ENCODE measurements at regions of chr14 and their contacts with region 1.

Region 1: GRCh38 chr14:61662437-61663311 is 32.6 kb upstream of the HIF1A start:
- DNase-seq: peak; percentile 73
- H3K4me3 Mint-ChIP-seq: peak overlapping the region; percentile 60
- H3K27ac Mint-ChIP-seq: peak overlapping the region; percentile 98
- H3K4me1 Mint-ChIP-seq: peaks cover 66% of the 10 kb centered on the region
- H3K27me3 Mint-ChIP-seq: no peaks in the 10 kb centered on the region

Region 2: GRCh38 chr14:61342486-61342885 is 320.2 kb before region 1 on chr14:
- CTCF ChIA-PET with region 1: no interaction called
- POLR2A ChIA-PET with region 1: no interaction called
- intact Hi-C with region 1: loop called (anchors 5 kb)
- DNase-seq: peak; percentile 91
- H3K4me3 Mint-ChIP-seq: peak overlapping the region; percentile 82
- H3K27ac Mint-ChIP-seq: peak overlapping the region; percentile 98
- H3K4me1 Mint-ChIP-seq: peaks cover 94% of the 10 kb centered on the region
- H3K27me3 Mint-ChIP-seq: no peaks in the 10 kb centered on the region

Region 3: DNA sequence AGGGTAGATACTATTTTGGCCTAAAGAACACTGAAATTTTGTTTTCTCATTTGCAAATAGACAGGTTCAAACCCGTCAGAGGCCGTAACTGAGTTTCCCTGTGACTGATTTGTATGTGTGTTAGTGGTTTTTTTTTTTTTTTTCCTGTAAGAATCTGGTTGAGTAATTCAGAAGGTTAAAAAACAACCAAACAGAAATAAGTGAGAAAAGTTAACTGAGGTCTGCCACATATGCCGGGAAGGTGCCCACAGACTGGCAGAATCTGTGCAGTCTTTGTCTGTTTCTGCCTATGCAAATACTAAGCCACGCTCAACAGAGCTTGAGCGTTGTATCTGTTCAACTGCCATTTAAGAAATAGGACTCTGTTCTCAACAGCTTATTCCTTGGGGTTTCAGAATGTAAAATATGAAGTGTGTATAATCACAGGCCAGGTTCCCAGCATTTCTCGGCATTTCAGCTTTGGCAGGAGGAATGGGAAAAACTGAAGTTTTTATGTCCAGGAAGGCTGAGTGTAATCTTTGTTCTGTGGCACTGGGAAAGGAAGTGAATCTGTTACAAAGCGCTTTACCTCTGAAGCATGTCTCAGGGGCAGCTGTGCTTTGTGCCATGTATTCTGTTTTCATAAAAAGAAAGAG is 159.4 kb before region 1 on chr14:
- CTCF ChIA-PET with region 1: interaction called, 3 read pairs
- POLR2A ChIA-PET with region 1: interaction called, 16 read pairs
- intact Hi-C with region 1: loop called (anchors 1 kb)
- DNase-seq: peak; percentile 90
- H3K4me3 Mint-ChIP-seq: peak overlapping the region; percentile 62
- H3K27ac Mint-ChIP-seq: peak overlapping the region; percentile 98
- H3K4me1 Mint-ChIP-seq: peaks cover 98% of the 10 kb centered on the region
- H3K27me3 Mint-ChIP-seq: no peaks in the 10 kb centered on the region

Region 4: GRCh38 chr14:61561657-61562276 is 100.9 kb before region 1 on chr14:
- CTCF ChIA-PET with region 1: interaction called, 4 read pairs
- POLR2A ChIA-PET with region 1: interaction called, 5 read pairs
- intact Hi-C with region 1: loop called (anchors 1 kb)
- DNase-seq: no peak
- H3K4me3 Mint-ChIP-seq: no peak overlapping the region
- H3K27ac Mint-ChIP-seq: peak overlapping the region; percentile 83
- H3K4me1 Mint-ChIP-seq: peaks cover 66% of the 10 kb centered on the region
- H3K27me3 Mint-ChIP-seq: no peaks in the 10 kb centered on the region

Region 5: DNA sequence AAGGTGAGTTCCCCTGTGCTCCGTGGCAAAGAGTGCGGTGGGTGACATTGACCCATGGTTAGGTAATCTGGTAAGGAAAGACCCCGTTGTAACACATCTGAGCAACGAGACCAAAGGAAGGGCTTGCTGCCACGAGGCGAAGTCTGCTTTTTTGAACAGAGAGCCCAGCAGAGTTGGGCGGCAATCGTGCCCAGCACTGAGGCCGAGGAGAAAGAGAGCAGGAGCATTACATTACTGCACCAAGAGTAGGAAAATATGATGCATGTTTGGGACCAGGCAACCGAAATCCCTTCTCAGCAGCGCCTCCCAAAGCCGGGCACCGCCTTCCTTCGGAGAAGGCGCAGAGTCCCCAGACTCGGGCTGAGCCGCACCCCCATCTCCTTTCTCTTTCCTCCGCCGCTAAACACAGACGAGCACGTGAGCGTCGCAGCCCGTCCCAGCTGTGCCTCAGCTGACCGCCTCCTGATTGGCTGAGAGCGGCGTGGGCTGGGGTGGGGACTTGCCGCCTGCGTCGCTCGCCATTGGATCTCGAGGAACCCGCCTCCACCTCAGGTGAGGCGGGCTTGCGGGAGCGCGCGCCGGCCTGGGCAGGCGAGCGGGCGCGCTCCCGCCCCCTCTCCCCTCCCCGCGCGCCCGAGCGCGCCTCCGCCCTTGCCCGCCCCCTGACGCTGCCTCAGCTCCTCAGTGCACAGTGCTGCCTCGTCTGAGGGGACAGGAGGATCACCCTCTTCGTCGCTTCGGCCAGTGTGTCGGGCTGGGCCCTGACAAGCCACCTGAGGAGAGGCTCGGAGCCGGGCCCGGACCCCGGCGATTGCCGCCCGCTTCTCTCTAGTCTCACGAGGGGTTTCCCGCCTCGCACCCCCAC is 32.4 kb after region 1 on chr14 and contains the start of gene HIF1A:
- CTCF ChIA-PET with region 1: interaction called, 9 read pairs
- POLR2A ChIA-PET with region 1: interaction called, 40 read pairs
- intact Hi-C with region 1: loop called (anchors 1 kb)
- DNase-seq: peak; percentile 99
- H3K4me3 Mint-ChIP-seq: peak within 1 kb of the TSS; percentile 98
- H3K27ac Mint-ChIP-seq: peak within 1 kb of the TSS; percentile 98
- H3K4me1 Mint-ChIP-seq: peaks cover 49% of the 10 kb centered on the region
- H3K27me3 Mint-ChIP-seq: no peaks in the 10 kb centered on the region
- total RNA-seq, gene HIF1A: 283 to 287 TPM

Measured in activated CD4-positive, alpha-beta memory T cell treated with anti-CD3 and anti-CD28 coated beads for 36 hours (primary cell).